Activated B cell treated with CpG ODN at 0.5 μM for 24 hours (primary cell): ENCODE measurements at regions of chr14 and their contacts with region 1.

Region 1: DNA sequence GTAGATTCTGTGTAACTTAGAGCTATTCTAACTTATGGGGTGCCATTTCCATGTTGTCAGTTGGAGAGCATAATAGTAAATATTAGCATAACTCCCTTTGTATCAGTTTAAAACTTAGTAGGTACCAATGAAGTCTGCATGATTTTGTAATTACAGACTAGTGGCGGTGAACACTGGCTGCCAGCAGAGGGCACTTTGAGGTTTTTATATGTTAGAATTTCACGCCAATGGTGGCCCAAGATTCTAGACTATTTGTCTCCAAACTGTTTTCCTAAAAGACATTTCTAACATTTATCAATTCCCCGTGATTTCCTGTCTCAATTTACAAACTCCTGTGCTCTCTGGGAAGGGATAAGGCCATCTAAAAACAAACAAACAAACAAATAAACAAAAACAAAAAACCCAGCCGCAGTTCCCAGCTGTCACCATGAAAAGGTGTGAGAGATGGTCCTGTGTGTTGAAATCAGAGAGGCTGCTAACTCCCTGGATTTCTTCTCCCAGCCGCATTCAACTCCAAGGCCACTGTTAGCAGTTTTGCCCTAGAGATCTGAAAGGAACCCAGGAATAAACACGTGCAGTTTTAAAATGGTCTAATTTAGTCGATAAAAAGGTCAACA is 57.6 kb downstream of the BRMS1L start:
- DNase-seq: no peak
- ATAC-seq: no peak
- H3K4me3 Mint-ChIP-seq: no peak overlapping the region
- H3K27ac Mint-ChIP-seq: no peak overlapping the region
- H3K4me1 Mint-ChIP-seq: peaks cover 7% of the 10 kb centered on the region
- H3K27me3 Mint-ChIP-seq: peaks cover 2% of the 10 kb centered on the region
- CTCF ChIP-seq: no peak

Region 2: GRCh38 chr14:35897616-35898111 is 13.9 kb after region 1 on chr14:
- CTCF ChIA-PET with region 1: no interaction called
- POLR2A ChIA-PET with region 1: no interaction called
- intact Hi-C with region 1: no loop called
- DNase-seq: no peak
- ATAC-seq: no peak
- H3K4me3 Mint-ChIP-seq: no peak overlapping the region
- H3K27ac Mint-ChIP-seq: no peak overlapping the region
- H3K4me1 Mint-ChIP-seq: no peaks in the 10 kb centered on the region
- H3K27me3 Mint-ChIP-seq: no peaks in the 10 kb centered on the region
- CTCF ChIP-seq: no peak

Region 3: GRCh38 chr14:36069532-36069894 is 185.7 kb after region 1 on chr14:
- CTCF ChIA-PET with region 1: no interaction called
- POLR2A ChIA-PET with region 1: no interaction called
- intact Hi-C with region 1: loop called (anchors 2 kb)
- DNase-seq: no peak
- ATAC-seq: no peak
- H3K4me3 Mint-ChIP-seq: no peak overlapping the region
- H3K27ac Mint-ChIP-seq: no peak overlapping the region
- H3K4me1 Mint-ChIP-seq: no peaks in the 10 kb centered on the region
- H3K27me3 Mint-ChIP-seq: peaks cover 13% of the 10 kb centered on the region
- CTCF ChIP-seq: no peak

Region 4: GRCh38 chr14:36373982-36374673 is 490.3 kb after region 1 on chr14:
- CTCF ChIA-PET with region 1: interaction called, 9 read pairs
- POLR2A ChIA-PET with region 1: no interaction called
- intact Hi-C with region 1: loop called (anchors 1 kb)
- DNase-seq: peak; percentile 22
- ATAC-seq: peak; percentile 71
- H3K4me3 Mint-ChIP-seq: no peak overlapping the region
- H3K27ac Mint-ChIP-seq: no peak overlapping the region
- H3K4me1 Mint-ChIP-seq: no peaks in the 10 kb centered on the region
- H3K27me3 Mint-ChIP-seq: peaks cover 2% of the 10 kb centered on the region
- CTCF ChIP-seq: no peak

Region 5: GRCh38 chr14:36553656-36554260 is 670.0 kb after region 1 on chr14:
- CTCF ChIA-PET with region 1: interaction called, 3 read pairs
- POLR2A ChIA-PET with region 1: no interaction called
- intact Hi-C with region 1: loop called (anchors 2 kb)
- DNase-seq: no peak
- ATAC-seq: no peak
- H3K4me3 Mint-ChIP-seq: no peak overlapping the region
- H3K27ac Mint-ChIP-seq: no peak overlapping the region
- H3K4me1 Mint-ChIP-seq: no peaks in the 10 kb centered on the region
- H3K27me3 Mint-ChIP-seq: peaks cover 2% of the 10 kb centered on the region
- CTCF ChIP-seq: no peak

Region 6: DNA sequence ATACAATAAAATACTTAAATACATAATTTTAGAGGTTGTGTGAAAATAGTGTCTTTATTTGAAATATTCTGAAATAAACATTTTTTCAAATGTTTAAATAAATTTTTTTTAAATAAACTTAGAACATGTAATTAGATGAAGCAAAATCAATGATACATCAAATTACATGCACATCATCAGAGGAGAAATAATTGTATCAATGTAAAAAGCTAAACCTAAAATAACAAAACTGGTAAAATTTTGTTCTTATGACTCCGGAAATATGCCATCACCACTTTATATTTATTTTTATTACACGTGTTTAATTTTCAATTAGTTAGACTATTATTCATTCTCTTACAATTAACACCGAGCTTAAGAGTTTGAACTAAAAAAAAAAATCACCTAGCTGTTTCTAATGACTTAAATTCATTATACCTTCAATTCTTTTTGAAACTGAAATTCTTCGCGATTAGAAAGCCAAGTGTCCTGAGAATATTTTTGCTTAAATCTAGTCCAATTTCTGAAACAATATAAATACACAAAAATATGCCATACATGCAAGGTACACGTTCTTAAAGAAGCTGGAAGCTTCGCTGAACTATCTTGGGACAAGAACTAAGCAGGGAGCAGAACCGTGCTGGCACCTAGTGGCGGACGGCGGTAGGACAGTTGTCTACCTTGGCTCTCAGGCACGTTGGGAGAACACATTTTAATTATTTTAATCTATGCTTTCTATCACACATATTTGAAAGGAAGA is 1058.2 kb after region 1 on chr14:
- CTCF ChIA-PET with region 1: interaction called, 3 read pairs
- POLR2A ChIA-PET with region 1: no interaction called
- intact Hi-C with region 1: loop called (anchors 2 kb)
- DNase-seq: no peak
- ATAC-seq: peak; percentile 64
- H3K4me3 Mint-ChIP-seq: no peak overlapping the region
- H3K27ac Mint-ChIP-seq: no peak overlapping the region
- H3K4me1 Mint-ChIP-seq: no peaks in the 10 kb centered on the region
- H3K27me3 Mint-ChIP-seq: no peaks in the 10 kb centered on the region
- CTCF ChIP-seq: peak; percentile 95